Activated naive CD4-positive, alpha-beta T cell treated with anti-CD3 and anti-CD28 coated beads for 36 hours (primary cell): ENCODE measurements at regions of chr16 and their contacts with region 1.

Region 1: DNA sequence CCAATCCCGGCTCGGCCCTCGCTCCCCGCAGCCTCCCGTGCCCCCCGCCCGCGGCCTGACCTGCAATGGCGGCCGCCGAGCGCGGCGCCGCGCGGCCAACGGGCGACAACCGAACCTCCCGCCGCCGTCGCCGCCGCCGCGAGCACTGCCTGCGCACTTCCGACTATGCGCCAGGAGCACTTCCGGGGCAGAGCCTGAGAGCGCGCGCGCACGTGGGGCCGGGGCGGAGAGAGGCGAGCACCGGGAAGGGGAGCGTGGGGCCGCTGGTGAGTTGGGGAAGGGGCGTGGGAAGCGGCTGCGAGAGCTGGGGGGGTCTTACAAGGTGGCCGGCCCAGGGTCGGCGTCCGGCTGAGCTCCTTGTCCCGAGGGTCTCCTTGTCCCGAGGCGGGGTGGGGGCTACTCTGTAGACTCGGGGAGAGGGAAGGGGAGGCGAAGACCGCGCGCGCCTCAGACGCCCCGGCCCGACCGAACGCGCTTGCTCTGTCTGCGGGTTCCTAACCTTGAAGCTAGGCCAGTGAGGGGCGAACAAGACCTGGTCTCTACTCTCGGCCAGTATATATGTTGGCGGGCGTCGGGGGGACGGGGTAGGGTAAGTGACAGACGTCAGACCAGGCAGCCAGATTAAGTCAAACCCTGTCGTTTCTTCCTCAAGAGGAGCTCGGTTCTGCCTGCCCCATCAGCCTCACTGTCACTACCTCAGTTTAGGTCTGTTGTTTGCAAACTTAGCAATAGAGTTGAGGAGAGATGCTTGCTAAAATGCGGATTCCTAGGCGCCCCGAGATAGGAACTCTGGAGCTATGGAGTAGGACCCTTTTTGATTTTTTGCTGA is at the starts of genes CHTF8 and UTP4:
- DNase-seq: peak; percentile 89
- H3K4me3 Mint-ChIP-seq: peak within 1 kb of the TSS; percentile 96
- H3K27ac Mint-ChIP-seq: peak within 1 kb of the TSS; percentile 90
- H3K4me1 Mint-ChIP-seq: peaks cover 59% of the 10 kb centered on the region
- H3K27me3 Mint-ChIP-seq: no peaks in the 10 kb centered on the region
- total RNA-seq, gene CHTF8: 114 to 117 TPM
- total RNA-seq, gene UTP4: 62.6 to 69.8 TPM

Region 2: GRCh38 chr16:69057400-69058378 is 74.9 kb before region 1 on chr16:
- CTCF ChIA-PET with region 1: no interaction called
- intact Hi-C with region 1: no loop called
- DNase-seq: no peak
- H3K4me3 Mint-ChIP-seq: no peak overlapping the region
- H3K27ac Mint-ChIP-seq: no peak overlapping the region
- H3K4me1 Mint-ChIP-seq: no peaks in the 10 kb centered on the region
- H3K27me3 Mint-ChIP-seq: no peaks in the 10 kb centered on the region

Region 3: GRCh38 chr16:69186642-69187445 is 54.2 kb after region 1 on chr16 and contains the start of gene SNTB2:
- CTCF ChIA-PET with region 1: no interaction called
- intact Hi-C with region 1: loop called (anchors 2 kb)
- DNase-seq: peak; percentile 86
- H3K4me3 Mint-ChIP-seq: peak within 1 kb of the TSS; percentile 91
- H3K27ac Mint-ChIP-seq: peak within 1 kb of the TSS; percentile 83
- H3K4me1 Mint-ChIP-seq: peaks cover 42% of the 10 kb centered on the region
- H3K27me3 Mint-ChIP-seq: no peaks in the 10 kb centered on the region
- total RNA-seq, gene SNTB2: 7.3 to 7.8 TPM